IMR-90 (cell line): ENCODE measurements at regions of chr5 and their contacts with region 1.

Region 1: DNA sequence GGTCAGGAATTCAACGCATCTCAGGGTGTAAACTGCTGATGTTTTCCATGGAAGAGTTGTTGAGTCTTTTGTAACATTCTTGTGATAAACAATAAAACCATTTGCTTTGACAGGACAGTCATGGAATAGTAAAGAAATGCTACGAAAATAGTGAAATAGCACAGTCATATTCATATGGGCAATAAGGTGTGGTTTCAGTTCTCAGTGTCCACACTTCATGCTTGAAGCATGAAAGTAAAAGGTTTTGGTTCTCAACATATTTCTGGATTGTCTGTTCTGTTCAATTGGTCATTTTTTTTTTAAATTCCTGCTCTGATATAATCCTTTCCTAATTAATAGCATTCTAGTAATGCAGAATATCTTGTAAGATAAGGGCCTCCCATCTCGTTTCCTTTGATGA is 467.6 kb upstream of the ZNF608 start:
- DNase-seq: no peak
- ATAC-seq: no peak
- H3K4me3 ChIP-seq: no peak overlapping the region
- H3K27ac ChIP-seq: no peak overlapping the region
- H3K4me1 ChIP-seq: no peaks in the 10 kb centered on the region
- H3K27me3 ChIP-seq: no peaks in the 10 kb centered on the region
- CTCF ChIP-seq: no peak
- POLR2A ChIP-seq: no peak
- RAD21 ChIP-seq: no peak

Region 2: GRCh38 chr5:125140855-125141254 is 73.2 kb before region 1 on chr5:
- CTCF ChIA-PET with region 1: no interaction called
- POLR2A ChIA-PET with region 1: no interaction called
- dilution Hi-C with region 1: no loop called
- in situ Hi-C with region 1: no loop called
- intact Hi-C with region 1: no loop called
- DNase-seq: peak; percentile 93
- ATAC-seq: peak; percentile 89
- H3K4me3 ChIP-seq: no peak overlapping the region
- H3K27ac ChIP-seq: no peak overlapping the region
- H3K4me1 ChIP-seq: peaks cover 2% of the 10 kb centered on the region
- H3K27me3 ChIP-seq: no peaks in the 10 kb centered on the region
- CTCF ChIP-seq: no peak
- POLR2A ChIP-seq: no peak
- RAD21 ChIP-seq: no peak

Region 3: GRCh38 chr5:125200842-125201373 is 13.2 kb before region 1 on chr5:
- CTCF ChIA-PET with region 1: interaction called, 5 read pairs
- POLR2A ChIA-PET with region 1: interaction called, 11 read pairs
- dilution Hi-C with region 1: no loop called
- in situ Hi-C with region 1: no loop called
- intact Hi-C with region 1: no loop called
- DNase-seq: no peak
- ATAC-seq: no peak
- H3K4me3 ChIP-seq: no peak overlapping the region
- H3K27ac ChIP-seq: no peak overlapping the region
- H3K4me1 ChIP-seq: peaks cover 5% of the 10 kb centered on the region
- H3K27me3 ChIP-seq: no peaks in the 10 kb centered on the region
- CTCF ChIP-seq: no peak
- POLR2A ChIP-seq: no peak
- RAD21 ChIP-seq: no peak